SK-N-SH (cell line): ENCODE measurements at regions of chr14 and their contacts with region 1.

Region 1: DNA sequence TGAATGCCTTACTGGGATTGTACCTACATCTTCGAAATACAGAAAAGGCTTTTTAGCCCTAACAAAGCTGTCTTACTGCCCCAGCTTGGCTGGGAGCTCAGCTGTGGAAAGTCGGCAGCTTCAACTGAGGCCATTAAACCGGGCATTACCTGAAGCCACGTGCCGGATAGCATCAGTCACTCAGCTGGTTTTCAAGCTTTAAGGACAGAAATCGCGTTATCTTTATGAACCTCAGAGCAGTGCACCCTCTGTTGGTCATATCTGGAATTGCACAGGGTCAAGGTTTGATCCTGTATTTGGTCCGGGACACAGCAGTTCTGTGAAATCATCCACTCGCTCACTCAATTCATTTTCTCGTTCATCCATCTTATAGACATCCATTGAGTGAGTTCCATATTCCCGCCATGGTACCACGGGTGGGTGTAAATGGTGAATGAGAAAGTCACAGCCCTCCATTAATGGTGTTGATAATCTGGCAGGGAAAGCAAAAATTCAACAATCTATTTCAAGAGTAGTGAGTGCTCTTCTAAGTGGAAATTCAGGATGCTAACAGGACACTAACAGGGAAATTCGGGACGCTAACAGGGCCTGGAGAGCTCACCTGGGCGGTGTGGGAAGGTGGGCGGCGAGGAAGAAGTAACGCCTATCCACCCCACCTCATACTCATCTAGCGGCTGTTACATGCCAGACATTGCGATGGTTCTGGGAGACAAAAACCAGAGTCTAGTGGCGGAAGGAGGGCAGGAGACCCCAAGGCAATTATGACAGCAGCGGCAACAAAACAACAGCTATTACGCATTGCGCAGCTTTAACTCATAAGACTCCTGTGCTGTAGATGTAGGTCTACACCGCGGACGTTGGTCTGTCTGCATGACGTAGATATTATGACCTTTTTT is 60.6 kb upstream of the TCL1A start:
- DNase-seq: peak; percentile 68
- H3K4me3 ChIP-seq: no peak overlapping the region
- H3K27ac ChIP-seq: no peak overlapping the region
- H3K4me1 ChIP-seq: no peaks in the 10 kb centered on the region; a peak in 1 of 4 replicates
- H3K27me3 ChIP-seq: no peaks in the 10 kb centered on the region
- CTCF ChIP-seq: peak; percentile 82
- EP300 ChIP-seq: no peak
- RAD21 ChIP-seq: peak; percentile 74

Region 2: GRCh38 chr14:95561001-95561412 is 213.5 kb before region 1 on chr14:
- CTCF ChIA-PET with region 1: interaction called, 67 read pairs
- POLR2A ChIA-PET with region 1: no interaction called
- DNase-seq: peak; percentile 87
- H3K4me3 ChIP-seq: peak overlapping the region in 1 of 2 experiments; percentile 40; a peak in 1 of 4 replicates
- H3K27ac ChIP-seq: no peak overlapping the region
- H3K4me1 ChIP-seq: no peaks in the 10 kb centered on the region; a peak in 1 of 4 replicates
- H3K27me3 ChIP-seq: no peaks in the 10 kb centered on the region
- CTCF ChIP-seq: peak; percentile 98
- EP300 ChIP-seq: no peak
- RAD21 ChIP-seq: peak; percentile 97

Region 3: DNA sequence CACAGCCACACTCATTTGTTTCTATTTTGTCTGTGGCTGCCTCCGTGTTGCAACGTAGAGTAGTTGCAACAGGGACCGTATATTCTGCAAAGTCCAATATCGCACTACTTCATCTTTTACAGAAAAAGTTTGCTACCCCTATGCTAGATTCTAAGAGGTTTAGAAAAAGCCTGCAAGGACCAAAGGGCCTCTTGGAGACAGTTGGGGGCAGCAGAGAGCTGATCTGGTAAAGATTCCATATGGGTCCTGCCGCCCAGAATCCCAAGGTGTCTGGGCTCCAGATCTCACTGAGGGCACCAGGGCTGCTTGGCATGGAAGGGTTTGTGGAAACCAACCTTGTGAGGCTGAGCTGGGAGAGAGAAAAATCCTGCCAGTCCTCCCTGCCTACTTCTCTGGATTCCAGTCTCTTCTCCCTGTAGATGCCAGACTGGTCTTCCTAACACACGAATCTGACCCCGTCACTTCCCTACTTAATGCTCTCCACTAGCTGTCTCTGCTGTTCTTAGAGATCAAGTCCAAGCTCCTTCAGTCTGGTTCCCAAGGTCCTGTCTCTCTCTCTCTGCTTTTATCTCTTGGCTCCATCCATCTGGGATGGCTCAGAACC is 165.0 kb before region 1 on chr14:
- CTCF ChIA-PET with region 1: interaction called, 44 read pairs
- POLR2A ChIA-PET with region 1: no interaction called
- DNase-seq: peak; percentile 63
- H3K4me3 ChIP-seq: peak overlapping the region in 1 of 2 experiments; percentile 26; a peak in 1 of 4 replicates
- H3K27ac ChIP-seq: no peak overlapping the region
- H3K4me1 ChIP-seq: no peaks in the 10 kb centered on the region
- H3K27me3 ChIP-seq: no peaks in the 10 kb centered on the region; the same call in 1 of the 2 replicates
- CTCF ChIP-seq: peak; percentile 54
- EP300 ChIP-seq: no peak
- RAD21 ChIP-seq: peak; percentile 79

Region 4: DNA sequence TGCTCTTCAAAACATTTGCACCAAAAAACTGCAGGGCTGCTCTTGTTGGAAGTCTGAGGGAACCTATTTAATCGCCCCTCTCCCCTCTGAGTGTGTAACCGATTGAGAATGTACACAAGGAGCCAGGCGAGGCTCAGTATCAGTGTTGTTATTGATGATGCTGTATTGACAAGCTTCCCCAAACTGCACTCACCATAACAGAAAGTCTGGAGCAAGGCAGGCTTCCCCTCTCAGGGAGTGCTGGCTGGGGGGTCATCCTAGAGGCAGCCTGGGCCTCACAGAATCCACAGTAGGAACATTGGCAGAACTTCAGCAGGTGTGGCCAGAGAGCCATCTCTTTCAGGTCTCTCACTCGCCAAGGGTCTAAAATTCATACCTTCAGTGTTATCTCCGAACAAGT is 44.1 kb after region 1 on chr14:
- CTCF ChIA-PET with region 1: no interaction called
- POLR2A ChIA-PET with region 1: no interaction called
- DNase-seq: no peak
- H3K4me3 ChIP-seq: no peak overlapping the region
- H3K27ac ChIP-seq: no peak overlapping the region
- H3K4me1 ChIP-seq: no peaks in the 10 kb centered on the region
- H3K27me3 ChIP-seq: no peaks in the 10 kb centered on the region
- CTCF ChIP-seq: no peak
- EP300 ChIP-seq: no peak
- RAD21 ChIP-seq: no peak

Region 5: DNA sequence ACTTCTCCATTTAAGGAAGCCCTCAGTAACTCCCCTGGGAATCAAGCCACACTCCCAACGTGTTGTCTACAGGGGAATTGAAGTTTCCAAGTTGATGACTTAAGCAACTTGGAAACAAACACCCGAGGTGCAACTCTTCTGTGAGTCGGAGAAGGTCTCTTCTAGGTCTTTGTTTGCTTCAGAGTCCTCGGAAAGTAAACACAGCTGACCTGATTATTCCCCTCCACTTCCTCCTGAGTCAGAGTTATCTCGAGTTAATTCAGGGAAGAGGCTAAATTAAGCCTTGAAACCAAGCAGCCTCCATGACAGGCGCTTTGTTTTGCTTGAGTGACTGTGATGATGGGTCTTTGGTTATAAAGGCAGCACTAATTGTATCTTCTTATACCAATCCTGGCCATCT is 143.9 kb after region 1 on chr14:
- CTCF ChIA-PET with region 1: no interaction called
- POLR2A ChIA-PET with region 1: no interaction called
- DNase-seq: no peak
- H3K4me3 ChIP-seq: no peak overlapping the region
- H3K27ac ChIP-seq: no peak overlapping the region
- H3K4me1 ChIP-seq: no peaks in the 10 kb centered on the region
- H3K27me3 ChIP-seq: no peaks in the 10 kb centered on the region
- CTCF ChIP-seq: no peak
- EP300 ChIP-seq: no peak
- RAD21 ChIP-seq: no peak

Region 6: GRCh38 chr14:95935228-95935822 is 160.8 kb after region 1 on chr14:
- CTCF ChIA-PET with region 1: no interaction called
- POLR2A ChIA-PET with region 1: no interaction called
- DNase-seq: no peak
- H3K4me3 ChIP-seq: no peak overlapping the region
- H3K27ac ChIP-seq: no peak overlapping the region
- H3K4me1 ChIP-seq: no peaks in the 10 kb centered on the region
- H3K27me3 ChIP-seq: no peaks in the 10 kb centered on the region
- CTCF ChIP-seq: no peak
- EP300 ChIP-seq: no peak
- RAD21 ChIP-seq: no peak

Region 7: GRCh38 chr14:95979339-95980042 is 205.0 kb after region 1 on chr14:
- CTCF ChIA-PET with region 1: interaction called, 11 read pairs
- POLR2A ChIA-PET with region 1: no interaction called
- DNase-seq: peak; percentile 44
- H3K4me3 ChIP-seq: no peak overlapping the region
- H3K27ac ChIP-seq: no peak overlapping the region
- H3K4me1 ChIP-seq: no peaks in the 10 kb centered on the region
- H3K27me3 ChIP-seq: no peaks in the 10 kb centered on the region
- CTCF ChIP-seq: peak; percentile 39
- EP300 ChIP-seq: no peak
- RAD21 ChIP-seq: peak; percentile 54

Region 8: GRCh38 chr14:96275177-96276112 is 500.9 kb after region 1 on chr14:
- CTCF ChIA-PET with region 1: no interaction called
- POLR2A ChIA-PET with region 1: no interaction called
- DNase-seq: peak; percentile 78
- H3K4me3 ChIP-seq: peak overlapping the region in 1 of 2 experiments; percentile 14; a peak in 1 of 4 replicates
- H3K27ac ChIP-seq: peak overlapping the region; percentile 67 to 68
- H3K4me1 ChIP-seq: peaks cover 18 to 30% of the 10 kb centered on the region in 2 experiments
- H3K27me3 ChIP-seq: no peaks in the 10 kb centered on the region
- CTCF ChIP-seq: peak; percentile 98
- EP300 ChIP-seq: no peak
- RAD21 ChIP-seq: peak; percentile 96